CD4-positive, alpha-beta T cell (primary cell): ENCODE measurements at regions of chr19 and their contacts with region 1.

Region 1: GRCh38 chr19:1789261-1790041 is 22.6 kb downstream of the ATP8B3 start:
- DNase-seq: peak in 1 of 14 experiments; percentile 32
- ATAC-seq: no peak
- H3K4me3 ChIP-seq: no peak overlapping the region
- H3K4me3 Mint-ChIP-seq: no peak overlapping the region
- H3K27ac ChIP-seq: no peak overlapping the region
- H3K27ac Mint-ChIP-seq: no peak overlapping the region
- H3K4me1 ChIP-seq: peaks cover 3% of the 10 kb centered on the region
- H3K4me1 Mint-ChIP-seq: no peaks in the 10 kb centered on the region
- H3K27me3 ChIP-seq: peaks cover 8 to 11% of the 10 kb centered on the region in 2 experiments
- H3K27me3 Mint-ChIP-seq: peaks cover 29% of the 10 kb centered on the region
- CTCF ChIP-seq: no peak

Region 2: GRCh38 chr19:1540365-1540925 is 249.0 kb before region 1 on chr19:
- CTCF ChIA-PET with region 1: no interaction called
- POLR2A ChIA-PET with region 1: no interaction called
- intact Hi-C with region 1: loop called in 1 of 2 experiments (anchors 10 kb)
- DNase-seq: no peak
- ATAC-seq: no peak
- H3K4me3 ChIP-seq: no peak overlapping the region
- H3K4me3 Mint-ChIP-seq: no peak overlapping the region
- H3K27ac ChIP-seq: no peak overlapping the region
- H3K27ac Mint-ChIP-seq: no peak overlapping the region
- H3K4me1 ChIP-seq: peaks cover 5% of the 10 kb centered on the region
- H3K4me1 Mint-ChIP-seq: no peaks in the 10 kb centered on the region
- H3K27me3 ChIP-seq: peaks cover 19 to 27% of the 10 kb centered on the region in 2 experiments
- H3K27me3 Mint-ChIP-seq: peaks cover 35% of the 10 kb centered on the region
- CTCF ChIP-seq: no peak

Region 3: GRCh38 chr19:1812469-1813196 is 23.2 kb after region 1 on chr19:
- CTCF ChIA-PET with region 1: no interaction called
- POLR2A ChIA-PET with region 1: no interaction called
- intact Hi-C with region 1: loop called in 1 of 2 experiments (anchors 1 kb)
- DNase-seq: peak; percentile 70 to 93 (median 78)
- ATAC-seq: peak; percentile 70
- H3K4me3 ChIP-seq: peak overlapping the region; percentile 81
- H3K4me3 Mint-ChIP-seq: peak overlapping the region; percentile 96
- H3K27ac ChIP-seq: peak overlapping the region in 1 of 2 donors; percentile 34
- H3K27ac Mint-ChIP-seq: peak overlapping the region; percentile 87
- H3K4me1 ChIP-seq: peaks cover 22% of the 10 kb centered on the region
- H3K4me1 Mint-ChIP-seq: peaks cover 11% of the 10 kb centered on the region
- H3K27me3 ChIP-seq: no peaks in the 10 kb centered on the region
- H3K27me3 Mint-ChIP-seq: no peaks in the 10 kb centered on the region
- CTCF ChIP-seq: peak; percentile 58

Region 4: GRCh38 chr19:1825909-1826556 is 36.6 kb after region 1 on chr19:
- CTCF ChIA-PET with region 1: no interaction called
- POLR2A ChIA-PET with region 1: no interaction called
- intact Hi-C with region 1: loop called in 1 of 2 experiments (anchors 1 kb)
- DNase-seq: peak; percentile 69 to 88 (median 74)
- ATAC-seq: peak; percentile 86
- H3K4me3 ChIP-seq: no peak overlapping the region
- H3K4me3 Mint-ChIP-seq: peak overlapping the region; percentile 15
- H3K27ac ChIP-seq: no peak overlapping the region
- H3K27ac Mint-ChIP-seq: peak overlapping the region; percentile 30
- H3K4me1 ChIP-seq: peaks cover 10% of the 10 kb centered on the region
- H3K4me1 Mint-ChIP-seq: peaks cover 4% of the 10 kb centered on the region
- H3K27me3 ChIP-seq: no peaks in the 10 kb centered on the region
- H3K27me3 Mint-ChIP-seq: no peaks in the 10 kb centered on the region
- CTCF ChIP-seq: peak; percentile 86